Cardiac septum (tissue), 1 donor: ENCODE measurements at regions of chr2 and their contacts with region 1.

Region 1: DNA sequence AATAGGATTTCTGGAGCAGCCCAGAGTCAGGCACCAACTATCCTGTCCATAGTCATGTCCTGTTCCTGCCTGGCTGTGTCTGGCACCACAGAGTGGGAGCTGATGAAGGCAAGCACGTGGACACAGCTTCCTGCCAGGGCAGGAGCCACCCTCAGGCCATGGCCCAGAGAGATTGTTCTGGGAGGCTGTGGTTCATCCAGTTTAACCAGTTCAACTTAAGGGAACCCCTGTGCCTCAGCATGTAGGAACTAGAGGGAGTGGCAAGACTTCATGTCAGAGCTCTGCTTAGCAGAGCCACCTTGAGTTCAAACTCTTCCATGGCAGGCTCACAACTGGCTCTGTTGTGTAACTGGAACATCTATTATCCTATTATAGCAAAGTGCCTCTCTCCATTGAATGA is 73.2 kb upstream of the NCKAP5 start:
- DNase-seq: no peak

Region 2: GRCh38 chr2:133579274-133579673 is 62.2 kb before region 1 on chr2:
- intact Hi-C with region 1: loop called (anchors 5 kb)
- DNase-seq: no peak

Region 3: GRCh38 chr2:133878326-133878725 is 236.8 kb after region 1 on chr2:
- intact Hi-C with region 1: no loop called
- DNase-seq: no peak